Sigmoid colon (tissue), 7 donors: ENCODE measurements at regions of chr11 and their contacts with region 1.

Region 1: GRCh38 chr11:85664615-85665481 is at the start of gene CREBZF:
- DNase-seq: peak; percentile 97
- H3K4me3 ChIP-seq: peak within 1 kb of the TSS; percentile 81 to 94 (median 90)
- H3K27ac ChIP-seq: peak within 1 kb of the TSS; percentile 96 to 99 (median 98)
- H3K4me1 ChIP-seq: peaks cover 0 to 39% (median 35%) of the 10 kb centered on the region in 4 donors
- H3K27me3 ChIP-seq: no peaks in the 10 kb centered on the region
- CTCF ChIP-seq: no peak
- EP300 ChIP-seq: no peak
- POLR2A ChIP-seq: peak; percentile 97
- total RNA-seq, gene CREBZF: 50.3 to 75.6 (median 61.8) TPM

Region 2: GRCh38 chr11:85595285-85595884 is 69.5 kb before region 1 on chr11:
- intact Hi-C with region 1: loop called (anchors 10 kb)
- DNase-seq: no peak
- H3K4me3 ChIP-seq: no peak overlapping the region
- H3K27ac ChIP-seq: no peak overlapping the region
- H3K4me1 ChIP-seq: no peaks in the 10 kb centered on the region
- H3K27me3 ChIP-seq: no peaks in the 10 kb centered on the region
- CTCF ChIP-seq: peak; percentile 14 to 52 (median 40)
- EP300 ChIP-seq: no peak
- POLR2A ChIP-seq: no peak

Region 3: GRCh38 chr11:85627998-85628770 is 36.7 kb before region 1 on chr11 and contains the start of gene TMEM126B:
- intact Hi-C with region 1: loop called (anchors 1 kb)
- DNase-seq: peak; percentile 99
- H3K4me3 ChIP-seq: peak within 1 kb of the TSS; percentile 58 to 90 (median 68)
- H3K27ac ChIP-seq: peak within 1 kb of the TSS; percentile 88 to 98 (median 96)
- H3K4me1 ChIP-seq: peaks cover 0 to 30% (median 27%) of the 10 kb centered on the region in 4 donors
- H3K27me3 ChIP-seq: no peaks in the 10 kb centered on the region
- CTCF ChIP-seq: no peak
- EP300 ChIP-seq: peak in 1 of 4 donors; percentile 27
- POLR2A ChIP-seq: peak; percentile 69 to 81
- total RNA-seq, gene TMEM126B: 39.3 to 87.5 (median 68.7) TPM

Region 4: DNA sequence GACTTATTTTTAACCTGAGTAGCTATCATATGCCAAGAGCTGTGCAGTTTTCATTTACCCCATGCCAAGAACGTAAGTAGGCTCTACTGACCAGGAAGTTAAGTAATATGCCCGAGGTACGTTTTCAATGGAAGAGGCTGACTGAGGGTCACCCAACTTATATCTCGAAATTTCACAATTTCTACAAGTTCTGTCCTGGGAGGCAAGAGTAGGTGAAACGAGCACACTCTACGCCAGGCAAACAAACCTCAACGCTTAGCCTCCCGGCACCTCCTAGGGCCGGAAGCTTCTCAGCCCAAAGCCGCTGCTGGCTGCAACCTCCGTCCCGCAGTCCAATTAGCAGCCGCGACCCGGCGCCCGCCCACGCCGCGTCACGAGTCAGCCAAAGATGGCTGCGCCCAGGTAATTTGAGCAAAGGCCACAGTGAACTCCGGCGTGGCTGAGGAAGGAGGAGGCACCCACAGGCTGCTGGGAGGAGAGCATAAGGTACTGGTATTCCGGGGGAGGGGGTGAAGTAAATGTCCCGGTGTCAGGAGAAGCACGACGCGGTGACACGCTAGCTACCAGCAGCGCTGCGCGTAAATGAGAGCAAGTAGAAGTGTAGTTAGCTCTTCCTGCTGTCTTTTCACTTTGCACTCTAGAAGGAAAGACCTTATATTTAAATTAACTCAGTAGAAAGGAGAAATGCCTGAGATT is 17.1 kb before region 1 on chr11 and contains the start of gene TMEM126A:
- intact Hi-C with region 1: loop called (anchors 2 kb)
- DNase-seq: peak; percentile 93
- H3K4me3 ChIP-seq: peak within 1 kb of the TSS; percentile 54 to 70 (median 64)
- H3K27ac ChIP-seq: peak within 1 kb of the TSS; percentile 76 to 83 (median 80)
- H3K4me1 ChIP-seq: peaks cover 0 to 24% (median 16%) of the 10 kb centered on the region in 4 donors
- H3K27me3 ChIP-seq: no peaks in the 10 kb centered on the region
- CTCF ChIP-seq: no peak
- EP300 ChIP-seq: peak in 1 of 4 donors; percentile 23
- POLR2A ChIP-seq: peak; percentile 45 to 61
- total RNA-seq, gene TMEM126A: 21.0 to 45.1 (median 38.1) TPM

Region 5: GRCh38 chr11:85682330-85683305 is 17.8 kb after region 1 on chr11:
- intact Hi-C with region 1: loop called (anchors 2 kb)
- DNase-seq: peak; percentile 84
- H3K4me3 ChIP-seq: peak overlapping the region; percentile 46 to 65 (median 63)
- H3K27ac ChIP-seq: peak overlapping the region; percentile 32 to 66 (median 60)
- H3K4me1 ChIP-seq: peaks cover 0 to 21% (median 12%) of the 10 kb centered on the region in 4 donors
- H3K27me3 ChIP-seq: no peaks in the 10 kb centered on the region
- CTCF ChIP-seq: no peak
- EP300 ChIP-seq: no peak
- POLR2A ChIP-seq: no peak

Region 6: GRCh38 chr11:86003654-86004053 is 338.8 kb after region 1 on chr11:
- intact Hi-C with region 1: no loop called
- DNase-seq: no peak
- H3K4me3 ChIP-seq: no peak overlapping the region
- H3K27ac ChIP-seq: no peak overlapping the region
- H3K4me1 ChIP-seq: no peaks in the 10 kb centered on the region
- H3K27me3 ChIP-seq: no peaks in the 10 kb centered on the region
- CTCF ChIP-seq: no peak
- EP300 ChIP-seq: no peak
- POLR2A ChIP-seq: no peak

Region 7: GRCh38 chr11:86244522-86245368 is 579.9 kb after region 1 on chr11 and contains the start of gene EED:
- intact Hi-C with region 1: loop called (anchors 10 kb)
- DNase-seq: peak; percentile 97
- H3K4me3 ChIP-seq: peak within 1 kb of the TSS; percentile 68 to 96 (median 75)
- H3K27ac ChIP-seq: peak within 1 kb of the TSS; percentile 95 to 100 (median 98)
- H3K4me1 ChIP-seq: peaks cover 0 to 42% (median 31%) of the 10 kb centered on the region in 4 donors
- H3K27me3 ChIP-seq: no peaks in the 10 kb centered on the region
- CTCF ChIP-seq: no peak
- EP300 ChIP-seq: no peak
- POLR2A ChIP-seq: peak; percentile 29 to 46
- total RNA-seq, gene EED: 18.2 to 28.6 (median 23.5) TPM